CD4-positive, alpha-beta memory T cell (primary cell): ENCODE measurements at regions of chr12 and their contacts with region 1.

Region 1: DNA sequence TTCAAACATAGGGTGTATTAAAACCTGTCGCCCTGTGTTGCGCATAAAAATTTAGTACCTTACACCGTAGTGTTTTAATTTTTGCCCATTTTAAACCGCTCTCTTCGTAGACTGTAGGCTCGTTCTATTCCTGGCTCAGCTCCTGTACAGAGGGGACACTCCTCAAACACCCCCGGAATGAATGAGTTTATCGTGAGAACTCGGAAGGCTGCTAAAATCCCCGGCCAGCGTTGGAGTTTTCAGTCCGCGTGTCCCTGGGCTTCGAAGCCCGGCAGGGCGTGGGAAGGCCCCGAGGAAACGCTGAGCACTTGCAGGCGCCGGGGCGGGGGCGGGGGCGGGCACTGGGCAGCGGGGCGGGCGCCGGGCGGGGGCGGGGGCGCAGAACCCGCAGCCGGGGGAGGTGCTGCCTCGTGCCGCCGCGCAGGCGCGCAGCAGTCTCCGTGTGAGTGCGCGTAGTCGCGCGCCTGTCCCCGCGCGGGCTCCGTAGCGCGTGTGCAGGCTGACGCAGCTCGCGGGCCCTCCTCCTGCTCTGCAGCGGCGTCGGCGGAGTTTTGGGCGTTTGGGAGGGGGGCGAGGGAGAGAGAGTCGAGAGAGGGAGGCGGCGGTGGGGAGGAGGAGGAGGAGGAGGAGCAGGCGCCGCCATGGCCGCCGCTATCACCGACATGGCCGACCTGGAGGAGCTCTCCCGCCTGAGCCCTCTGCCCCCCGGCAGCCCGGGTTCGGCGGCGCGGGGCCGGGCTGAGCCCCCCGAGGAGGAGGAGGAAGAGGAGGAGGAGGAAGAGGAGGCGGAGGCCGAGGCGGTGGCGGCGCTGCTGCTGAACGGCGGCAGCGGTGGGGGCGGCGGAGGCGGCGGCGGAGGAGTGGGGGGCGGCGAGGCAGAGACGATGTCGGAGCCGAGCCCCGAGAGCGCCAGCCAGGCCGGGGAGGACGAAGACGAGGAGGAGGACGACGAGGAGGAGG is at the start of gene AEBP2:
- DNase-seq: peak; percentile 92 to 97 (median 96)
- H3K4me3 ChIP-seq: peak within 1 kb of the TSS; percentile 21 to 85
- H3K4me3 Mint-ChIP-seq: peak within 1 kb of the TSS; percentile 95 to 99 (median 98)
- H3K27ac ChIP-seq: peak within 1 kb of the TSS; percentile 92
- H3K27ac Mint-ChIP-seq: peak within 1 kb of the TSS; percentile 95 to 98 (median 98)
- H3K4me1 ChIP-seq: peaks cover 37% of the 10 kb centered on the region
- H3K4me1 Mint-ChIP-seq: peaks cover 24 to 44% (median 31%) of the 10 kb centered on the region in 4 donors
- H3K27me3 ChIP-seq: no peaks in the 10 kb centered on the region
- H3K27me3 Mint-ChIP-seq: no peaks in the 10 kb centered on the region
- total RNA-seq, gene AEBP2: 58.5 to 61.6 TPM

Region 2: GRCh38 chr12:19129486-19130223 is 309.7 kb before region 1 on chr12 and contains the start of gene PLEKHA5:
- CTCF ChIA-PET with region 1: no interaction called
- POLR2A ChIA-PET with region 1: no interaction called
- intact Hi-C with region 1: loop called (anchors 5 kb)
- DNase-seq: peak; percentile 29 to 53 (median 38)
- H3K4me3 ChIP-seq: peak within 1 kb of the TSS; percentile 55 to 74
- H3K4me3 Mint-ChIP-seq: peak within 1 kb of the TSS; percentile 86 to 93 (median 91)
- H3K27ac ChIP-seq: peak within 1 kb of the TSS; percentile 38
- H3K27ac Mint-ChIP-seq: peak within 1 kb of the TSS; percentile 74 to 90 (median 88)
- H3K4me1 ChIP-seq: peaks cover 14% of the 10 kb centered on the region
- H3K4me1 Mint-ChIP-seq: peaks cover 10 to 27% (median 19%) of the 10 kb centered on the region in 4 donors
- H3K27me3 ChIP-seq: no peaks in the 10 kb centered on the region
- H3K27me3 Mint-ChIP-seq: peaks cover 0 to 7% of the 10 kb centered on the region in 2 donors
- total RNA-seq, gene PLEKHA5: 15.6 to 15.9 TPM

Region 3: GRCh38 chr12:19273482-19274330 is 165.6 kb before region 1 on chr12:
- CTCF ChIA-PET with region 1: no interaction called
- POLR2A ChIA-PET with region 1: interaction called, 5 read pairs
- intact Hi-C with region 1: loop called (anchors 5 kb)
- DNase-seq: peak; percentile 62 to 87 (median 74)
- H3K4me3 ChIP-seq: no peak overlapping the region
- H3K4me3 Mint-ChIP-seq: peak overlapping the region in 6 of 8 donors; percentile 10 to 79 (median 52)
- H3K27ac ChIP-seq: no peak overlapping the region
- H3K27ac Mint-ChIP-seq: peak overlapping the region; percentile 76 to 89 (median 81)
- H3K4me1 ChIP-seq: peaks cover 20% of the 10 kb centered on the region
- H3K4me1 Mint-ChIP-seq: peaks cover 15 to 29% (median 21%) of the 10 kb centered on the region in 4 donors
- H3K27me3 ChIP-seq: no peaks in the 10 kb centered on the region
- H3K27me3 Mint-ChIP-seq: peaks cover 0 to 2% of the 10 kb centered on the region in 2 donors

Region 4: GRCh38 chr12:19453961-19454360 is 14.6 kb after region 1 on chr12:
- CTCF ChIA-PET with region 1: interaction called, 3 read pairs
- POLR2A ChIA-PET with region 1: interaction called, 3 read pairs
- intact Hi-C with region 1: loop called (anchors 2 kb)
- DNase-seq: no peak
- H3K4me3 ChIP-seq: no peak overlapping the region
- H3K4me3 Mint-ChIP-seq: peak overlapping the region in 2 of 8 donors; percentile 0 to 38
- H3K27ac ChIP-seq: no peak overlapping the region
- H3K27ac Mint-ChIP-seq: peak overlapping the region in 2 of 7 donors; percentile 14 to 62
- H3K4me1 ChIP-seq: peaks cover 60% of the 10 kb centered on the region
- H3K4me1 Mint-ChIP-seq: peaks cover 56 to 93% (median 75%) of the 10 kb centered on the region in 4 donors
- H3K27me3 ChIP-seq: no peaks in the 10 kb centered on the region
- H3K27me3 Mint-ChIP-seq: no peaks in the 10 kb centered on the region

Region 5: DNA sequence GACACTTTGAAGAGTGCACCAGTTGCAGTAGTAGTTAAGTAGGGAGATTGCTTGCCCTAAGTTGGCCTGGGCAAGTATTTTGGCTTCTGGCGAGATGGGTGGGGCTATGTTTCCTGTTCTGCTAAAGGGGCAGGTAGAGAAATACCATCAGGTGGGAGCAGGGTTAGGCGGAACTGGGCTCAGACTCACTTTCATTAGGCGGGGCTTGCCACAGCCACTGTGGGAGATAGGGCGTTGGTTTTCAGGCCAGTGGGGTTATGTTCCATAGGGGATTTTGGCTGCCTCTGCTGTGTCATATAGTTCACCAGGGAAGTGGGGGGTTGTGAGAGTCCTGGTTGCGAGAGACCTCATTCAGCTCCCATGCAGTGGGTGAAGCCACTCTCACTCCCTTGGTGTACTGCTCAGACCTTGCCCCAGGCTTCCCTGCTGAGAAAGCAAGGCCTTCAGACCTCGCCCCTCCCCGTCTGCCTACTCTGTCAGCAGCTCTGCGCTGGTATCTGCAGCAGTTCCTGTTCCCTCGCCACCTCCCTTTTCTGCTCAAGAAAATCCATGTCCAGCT is 43.3 kb after region 1 on chr12:
- CTCF ChIA-PET with region 1: no interaction called
- POLR2A ChIA-PET with region 1: interaction called, 4 read pairs
- intact Hi-C with region 1: loop called (anchors 5 kb)
- DNase-seq: peak; percentile 32 to 71 (median 37)
- H3K4me3 ChIP-seq: peak overlapping the region; percentile 6 to 23
- H3K4me3 Mint-ChIP-seq: peak overlapping the region; percentile 35 to 83 (median 68)
- H3K27ac ChIP-seq: peak overlapping the region; percentile 53
- H3K27ac Mint-ChIP-seq: peak overlapping the region; percentile 56 to 96 (median 89)
- H3K4me1 ChIP-seq: peaks cover 52% of the 10 kb centered on the region
- H3K4me1 Mint-ChIP-seq: peaks cover 49 to 70% (median 56%) of the 10 kb centered on the region in 4 donors
- H3K27me3 ChIP-seq: no peaks in the 10 kb centered on the region
- H3K27me3 Mint-ChIP-seq: no peaks in the 10 kb centered on the region

Region 6: GRCh38 chr12:19553175-19553574 is 113.8 kb after region 1 on chr12:
- CTCF ChIA-PET with region 1: no interaction called
- POLR2A ChIA-PET with region 1: no interaction called
- intact Hi-C with region 1: no loop called
- DNase-seq: no peak
- H3K4me3 ChIP-seq: no peak overlapping the region
- H3K4me3 Mint-ChIP-seq: peak overlapping the region; percentile 73 to 93 (median 84)
- H3K27ac ChIP-seq: no peak overlapping the region
- H3K27ac Mint-ChIP-seq: peak overlapping the region in 5 of 7 donors; percentile 35 to 89 (median 74)
- H3K4me1 ChIP-seq: peaks cover 19% of the 10 kb centered on the region
- H3K4me1 Mint-ChIP-seq: peaks cover 10 to 28% (median 19%) of the 10 kb centered on the region in 4 donors
- H3K27me3 ChIP-seq: no peaks in the 10 kb centered on the region
- H3K27me3 Mint-ChIP-seq: no peaks in the 10 kb centered on the region